GM13977 (cell line): ENCODE measurements at regions of chr1 and their contacts with region 1.

Region 1: GRCh38 chr1:178501705-178502329 is 5.1 kb upstream of the CLEC20A start:
- DNase-seq: peak; percentile 87
- CTCF ChIP-seq: peak; percentile 92

Region 2: GRCh38 chr1:178344513-178345082 is 157.2 kb before region 1 on chr1:
- in situ Hi-C with region 1: loop called (anchors 25 kb)
- DNase-seq: peak; percentile 11
- CTCF ChIP-seq: peak; percentile 41

Region 3: DNA sequence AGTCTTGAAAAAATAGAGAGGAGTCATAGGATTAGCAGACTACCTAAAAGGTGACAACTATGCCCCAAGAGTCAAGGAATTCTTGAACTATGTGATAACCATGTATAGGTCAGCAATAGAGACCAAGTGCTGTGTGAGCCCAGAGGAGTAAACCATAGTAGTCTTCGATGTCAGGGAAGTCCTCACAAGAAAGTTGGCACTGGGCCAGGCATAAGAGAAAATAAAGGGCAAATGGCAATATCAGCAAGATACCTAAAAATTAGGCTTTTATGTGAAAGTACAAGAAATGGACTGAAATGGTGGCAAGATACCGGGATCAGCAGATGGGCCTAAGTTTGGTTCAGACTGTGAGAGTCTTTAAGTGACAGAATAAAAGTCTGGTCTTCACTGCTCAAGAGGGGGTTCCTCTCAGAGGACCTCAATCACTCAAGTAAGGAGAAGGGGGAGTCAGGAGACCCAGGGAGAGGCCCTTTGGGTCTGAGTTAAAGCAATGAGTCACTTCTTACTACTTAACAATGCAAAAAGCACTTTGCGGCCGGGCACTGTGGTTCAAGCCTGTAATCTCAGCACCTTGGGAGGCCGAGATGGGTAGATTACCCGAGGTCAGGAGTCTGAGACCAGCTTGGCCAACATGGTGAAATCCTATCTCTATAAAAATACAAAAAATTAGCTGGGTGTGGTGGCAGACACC is 106.0 kb after region 1 on chr1:
- in situ Hi-C with region 1: no loop called
- DNase-seq: peak; percentile 52
- CTCF ChIP-seq: no peak